Colonic mucosa (tissue), 4 donors: ENCODE measurements at regions of chr9 and their contacts with region 1.

Region 1: GRCh38 chr9:123846966-123847365 is 83.0 kb downstream of the DENND1A start:
- DNase-seq: no peak
- H3K4me3 ChIP-seq: no peak overlapping the region
- H3K27ac ChIP-seq: no peak overlapping the region
- H3K4me1 ChIP-seq: no peaks in the 10 kb centered on the region
- H3K27me3 ChIP-seq: no peaks in the 10 kb centered on the region
- CTCF ChIP-seq: no peak

Region 2: GRCh38 chr9:123119566-123119965 is 727.4 kb before region 1 on chr9:
- intact Hi-C with region 1: no loop called
- DNase-seq: no peak
- H3K4me3 ChIP-seq: no peak overlapping the region
- H3K27ac ChIP-seq: no peak overlapping the region
- H3K4me1 ChIP-seq: no peaks in the 10 kb centered on the region
- H3K27me3 ChIP-seq: no peaks in the 10 kb centered on the region
- CTCF ChIP-seq: no peak

Region 3: GRCh38 chr9:123828449-123828848 is 18.5 kb before region 1 on chr9:
- intact Hi-C with region 1: loop called (anchors 2 kb)
- DNase-seq: no peak
- H3K4me3 ChIP-seq: no peak overlapping the region
- H3K27ac ChIP-seq: no peak overlapping the region
- H3K4me1 ChIP-seq: no peaks in the 10 kb centered on the region
- H3K27me3 ChIP-seq: no peaks in the 10 kb centered on the region
- CTCF ChIP-seq: no peak